CD8-positive, alpha-beta memory T cell (primary cell): ENCODE measurements at regions of chr7 and their contacts with region 1.

Region 1: GRCh38 chr7:30348083-30348560 is 63.7 kb downstream of the ZNRF2 start:
- DNase-seq: peak; percentile 20 to 79 (median 67)
- H3K4me3 ChIP-seq: peak overlapping the region; percentile 17
- H3K4me3 Mint-ChIP-seq: peak overlapping the region; percentile 54 to 79 (median 65)
- H3K27ac ChIP-seq: peak overlapping the region; percentile 60
- H3K27ac Mint-ChIP-seq: peak overlapping the region; percentile 78 to 98 (median 90)
- H3K4me1 ChIP-seq: peaks cover 35% of the 10 kb centered on the region
- H3K4me1 Mint-ChIP-seq: peaks cover 64 to 86% (median 79%) of the 10 kb centered on the region in 3 donors
- H3K27me3 ChIP-seq: no peaks in the 10 kb centered on the region
- H3K27me3 Mint-ChIP-seq: no peaks in the 10 kb centered on the region

Region 2: DNA sequence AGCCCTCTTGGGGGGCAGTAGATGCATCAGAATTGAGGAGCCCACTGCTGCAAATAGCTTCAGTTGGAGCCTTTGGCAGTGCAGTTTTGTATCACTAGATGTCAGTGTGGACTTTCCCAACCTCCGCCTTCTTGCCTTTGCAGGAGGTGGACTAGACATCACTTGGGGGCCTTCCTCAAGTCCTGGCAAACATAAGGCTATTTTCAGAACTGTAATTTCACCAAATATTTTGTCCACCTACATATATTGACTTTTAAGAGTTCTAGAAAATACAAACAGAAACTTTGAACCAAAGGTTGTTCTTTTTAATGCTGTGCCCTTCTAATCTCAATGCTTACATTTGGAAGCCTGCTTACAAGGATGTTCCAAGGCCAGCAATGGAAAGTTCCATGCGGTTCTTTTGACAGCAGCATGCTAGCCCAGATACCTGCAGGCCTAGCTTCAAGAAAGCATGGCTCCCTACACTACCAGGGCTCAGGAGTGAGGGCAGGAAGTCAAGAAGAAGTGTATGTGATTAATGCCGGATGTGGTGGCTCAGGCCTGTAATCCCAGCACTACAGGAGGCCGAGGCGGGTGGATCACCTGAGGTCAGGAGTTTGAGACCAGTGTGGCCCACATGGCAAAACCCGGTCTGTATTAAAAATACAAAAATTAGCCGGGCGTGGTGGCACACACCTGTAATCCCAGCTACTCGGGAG is 71.8 kb before region 1 on chr7:
- CTCF ChIA-PET with region 1: interaction called, 30 read pairs
- POLR2A ChIA-PET with region 1: interaction called, 3 read pairs
- DNase-seq: peak; percentile 15 to 68 (median 32)
- H3K4me3 ChIP-seq: no peak overlapping the region
- H3K4me3 Mint-ChIP-seq: no peak overlapping the region
- H3K27ac ChIP-seq: no peak overlapping the region
- H3K27ac Mint-ChIP-seq: no peak overlapping the region
- H3K4me1 ChIP-seq: no peaks in the 10 kb centered on the region
- H3K4me1 Mint-ChIP-seq: peaks cover 7 to 13% (median 12%) of the 10 kb centered on the region in 3 donors
- H3K27me3 ChIP-seq: no peaks in the 10 kb centered on the region
- H3K27me3 Mint-ChIP-seq: peaks cover 0 to 2% of the 10 kb centered on the region in 2 donors

Region 3: DNA sequence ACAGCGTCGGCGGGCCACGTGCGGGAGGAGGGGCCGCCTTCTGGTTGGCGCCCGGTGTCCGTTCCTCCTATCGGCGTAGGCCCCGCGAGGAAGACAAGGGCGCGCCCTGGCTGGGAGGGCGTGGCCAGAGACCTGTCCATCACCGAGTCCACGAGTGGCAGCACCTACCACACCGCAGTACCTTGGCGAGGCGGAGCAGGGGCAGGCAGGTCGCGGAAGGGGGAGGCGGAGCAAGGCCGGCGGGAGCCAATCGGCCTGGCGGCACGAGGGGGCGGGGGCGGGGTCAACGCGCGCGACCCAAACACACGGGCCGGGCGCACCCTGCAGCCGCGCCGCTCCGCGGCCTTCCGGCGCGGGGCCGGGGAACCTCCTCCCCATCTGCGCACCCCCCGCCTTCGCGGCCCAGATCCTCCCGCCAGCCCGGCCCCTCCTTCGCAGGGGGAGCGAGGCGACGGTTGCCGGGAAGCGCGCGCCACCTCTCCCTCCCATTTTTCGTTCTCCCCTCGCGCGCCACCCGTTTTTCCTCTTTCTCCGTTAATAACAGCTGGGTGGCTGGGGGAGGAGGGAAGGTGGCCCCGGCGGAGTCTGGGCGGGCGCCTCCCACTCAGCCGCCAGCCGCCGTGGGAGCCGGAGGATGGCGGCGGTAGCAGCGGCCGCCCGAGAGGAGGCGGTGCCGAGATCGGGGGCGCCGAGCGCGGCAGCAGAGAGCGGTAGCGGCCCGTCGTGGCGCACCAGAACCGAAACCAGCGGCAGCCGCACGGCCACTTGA is 63.6 kb before region 1 on chr7 and contains the start of gene ZNRF2:
- CTCF ChIA-PET with region 1: interaction called, 9 read pairs
- POLR2A ChIA-PET with region 1: interaction called, 22 read pairs
- DNase-seq: peak; percentile 98 to 100 (median 98)
- H3K4me3 ChIP-seq: peak within 1 kb of the TSS; percentile 44
- H3K4me3 Mint-ChIP-seq: peak within 1 kb of the TSS; percentile 82 to 92 (median 88)
- H3K27ac ChIP-seq: peak within 1 kb of the TSS; percentile 80
- H3K27ac Mint-ChIP-seq: peak within 1 kb of the TSS; percentile 87 to 97 (median 95)
- H3K4me1 ChIP-seq: peaks cover 26% of the 10 kb centered on the region
- H3K4me1 Mint-ChIP-seq: peaks cover 43 to 56% (median 51%) of the 10 kb centered on the region in 3 donors
- H3K27me3 ChIP-seq: no peaks in the 10 kb centered on the region
- H3K27me3 Mint-ChIP-seq: no peaks in the 10 kb centered on the region
- total RNA-seq, gene ZNRF2: 12.4 to 13.6 TPM

Region 4: GRCh38 chr7:30322271-30323005 is 25.7 kb before region 1 on chr7:
- CTCF ChIA-PET with region 1: interaction called, 9 read pairs
- POLR2A ChIA-PET with region 1: interaction called, 19 read pairs
- DNase-seq: peak in 2 of 5 donors; percentile 23 to 36
- H3K4me3 ChIP-seq: peak overlapping the region; percentile 23
- H3K4me3 Mint-ChIP-seq: peak overlapping the region; percentile 80 to 90 (median 88)
- H3K27ac ChIP-seq: peak overlapping the region; percentile 41
- H3K27ac Mint-ChIP-seq: peak overlapping the region; percentile 96 to 99 (median 98)
- H3K4me1 ChIP-seq: peaks cover 36% of the 10 kb centered on the region
- H3K4me1 Mint-ChIP-seq: peaks cover 74 to 93% (median 88%) of the 10 kb centered on the region in 3 donors
- H3K27me3 ChIP-seq: no peaks in the 10 kb centered on the region
- H3K27me3 Mint-ChIP-seq: no peaks in the 10 kb centered on the region

Region 5: DNA sequence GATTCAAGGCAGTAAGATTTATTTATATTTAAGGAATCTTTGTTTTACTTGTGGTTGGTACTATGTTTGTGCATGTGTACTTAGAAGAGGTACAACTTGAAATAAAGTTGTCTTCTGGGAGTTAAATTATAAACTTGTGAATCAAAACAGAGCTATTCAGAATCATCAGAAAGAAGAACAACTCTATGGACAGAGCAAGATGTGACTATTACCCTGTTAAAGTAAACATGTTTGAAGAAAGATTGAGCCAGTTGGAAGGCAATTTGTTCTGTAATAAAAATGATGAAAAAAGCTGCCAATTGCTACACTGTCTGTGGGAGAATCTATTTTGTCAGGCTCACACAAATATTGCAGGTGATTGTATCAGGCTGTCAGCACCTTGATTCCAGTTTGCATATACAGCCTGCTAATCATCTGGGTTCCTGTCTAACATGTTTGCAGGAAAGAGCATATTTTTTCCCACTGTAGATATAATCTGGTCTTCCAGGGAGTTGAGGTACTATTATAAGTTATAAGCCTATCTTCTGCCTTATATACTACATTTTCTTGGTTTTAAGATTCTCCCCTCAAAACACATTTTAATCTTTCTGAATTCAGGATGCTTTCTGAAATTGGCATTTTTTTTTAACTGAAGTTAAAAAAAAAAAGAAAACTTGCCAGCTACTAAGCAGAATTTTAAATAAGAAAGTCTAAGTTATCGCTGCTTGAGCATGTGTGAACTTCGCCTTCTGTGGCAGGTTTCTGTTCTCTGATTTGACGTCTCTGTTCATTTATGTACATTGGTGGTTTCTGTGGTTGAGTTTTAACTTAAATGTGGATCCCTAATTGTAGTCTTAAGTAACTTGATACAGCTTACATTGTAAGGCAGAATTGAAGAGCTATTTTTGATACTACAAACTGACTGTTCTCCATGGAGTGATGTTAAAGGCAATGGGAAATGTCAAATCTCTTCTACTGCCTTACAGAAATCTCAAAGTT is 17.7 kb before region 1 on chr7:
- CTCF ChIA-PET with region 1: interaction called, 3 read pairs
- POLR2A ChIA-PET with region 1: interaction called, 14 read pairs
- DNase-seq: peak; percentile 1 to 70 (median 49)
- H3K4me3 ChIP-seq: no peak overlapping the region
- H3K4me3 Mint-ChIP-seq: peak overlapping the region; percentile 22 to 69 (median 58)
- H3K27ac ChIP-seq: no peak overlapping the region
- H3K27ac Mint-ChIP-seq: peak overlapping the region; percentile 41 to 95 (median 68)
- H3K4me1 ChIP-seq: peaks cover 36% of the 10 kb centered on the region
- H3K4me1 Mint-ChIP-seq: peaks cover 63 to 86% (median 83%) of the 10 kb centered on the region in 3 donors
- H3K27me3 ChIP-seq: no peaks in the 10 kb centered on the region
- H3K27me3 Mint-ChIP-seq: no peaks in the 10 kb centered on the region